Activated CD8-positive, alpha-beta T cell treated with anti-CD3 and anti-CD28 coated beads, Interleukin-2, amount 10 ng/mL, durations not matched to agents 7 days and 5 days (primary cell): ENCODE measurements at regions of chr1 and their contacts with region 1.

Region 1: DNA sequence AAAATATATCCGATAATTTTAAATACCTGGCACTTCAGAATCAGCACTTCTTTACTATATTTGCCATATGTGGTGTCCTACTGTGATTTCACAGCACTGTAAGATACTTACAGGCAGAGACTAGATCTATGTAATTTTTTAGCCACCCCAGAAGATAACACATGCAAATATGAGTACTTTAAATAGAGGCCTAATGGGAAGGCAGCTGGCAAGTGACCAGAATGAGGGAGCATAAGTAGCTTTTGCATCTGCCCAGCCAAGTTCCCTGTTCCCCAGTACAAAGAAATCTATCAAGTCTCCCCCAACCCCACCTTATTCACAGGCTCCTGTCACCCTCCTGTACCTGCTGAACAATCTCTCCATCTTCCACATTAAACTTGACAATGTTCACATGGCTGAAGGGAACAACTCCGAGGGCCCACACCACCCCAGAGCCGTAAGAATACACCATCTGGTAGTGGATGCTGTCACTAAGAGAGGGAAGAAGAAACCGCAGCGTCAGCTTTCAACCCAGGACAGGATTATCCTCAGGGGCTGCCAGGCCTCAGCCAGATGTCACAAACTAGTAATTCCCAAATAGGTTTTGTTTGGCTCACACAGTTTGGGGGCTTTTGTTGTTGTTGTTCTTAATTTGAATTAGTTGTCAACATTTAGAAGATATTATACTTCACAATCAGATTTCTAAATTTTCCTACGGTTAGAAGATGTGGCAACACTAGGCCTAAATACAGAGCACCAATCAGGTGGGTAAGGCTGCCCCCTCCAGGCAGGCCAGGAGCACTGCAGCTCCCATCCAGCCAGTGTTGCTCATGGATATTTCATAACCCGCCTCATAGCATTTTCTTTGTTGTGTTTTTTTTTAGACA is 10.4 kb downstream of the EMC1 start:
- DNase-seq: peak; percentile 72
- ATAC-seq: peak; percentile 85
- H3K4me3 Mint-ChIP-seq: no peak overlapping the region
- H3K27ac Mint-ChIP-seq: peak overlapping the region; percentile 30
- H3K4me1 Mint-ChIP-seq: no peaks in the 10 kb centered on the region
- H3K27me3 Mint-ChIP-seq: no peaks in the 10 kb centered on the region

Region 2: DNA sequence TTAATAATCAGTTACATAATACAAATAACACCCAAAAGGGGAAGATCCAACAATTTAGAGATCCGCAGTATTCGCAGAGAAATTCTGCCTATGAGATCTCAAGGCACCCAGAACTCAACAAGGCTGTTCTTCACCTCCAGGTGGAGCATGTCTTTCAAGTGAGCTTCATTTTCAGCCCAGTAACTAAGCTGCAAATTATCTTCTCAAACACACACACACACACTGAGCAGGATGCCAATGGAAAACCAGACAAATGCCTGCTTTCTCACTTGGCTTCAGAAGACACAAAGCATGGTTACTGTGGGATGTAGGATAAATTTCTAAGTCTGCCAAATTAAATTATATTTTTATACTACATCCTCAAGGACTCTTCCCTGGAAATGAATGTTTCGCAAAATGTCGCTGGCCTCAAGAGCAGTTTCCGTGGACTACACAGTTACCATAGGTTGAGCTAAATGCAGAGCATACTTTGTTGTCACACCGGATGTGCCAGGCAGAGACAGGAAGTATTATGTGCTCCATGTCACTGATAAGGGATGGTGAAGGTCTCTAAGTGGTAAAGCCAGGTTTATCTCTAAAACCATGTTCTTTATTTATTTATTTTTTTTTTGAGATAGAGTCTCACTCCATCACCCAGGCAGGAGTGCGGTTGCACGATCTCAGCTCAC is 61.2 kb before region 1 on chr1:
- CTCF ChIA-PET with region 1: interaction called, 27 read pairs
- POLR2A ChIA-PET with region 1: no interaction called
- DNase-seq: peak; percentile 64
- ATAC-seq: peak; percentile 83
- H3K4me3 Mint-ChIP-seq: no peak overlapping the region
- H3K27ac Mint-ChIP-seq: peak overlapping the region; percentile 86
- H3K4me1 Mint-ChIP-seq: peaks cover 28% of the 10 kb centered on the region
- H3K27me3 Mint-ChIP-seq: no peaks in the 10 kb centered on the region

Region 3: GRCh38 chr1:19251305-19252196 is 10.6 kb after region 1 on chr1 and contains the starts of genes EMC1 and MRTO4:
- CTCF ChIA-PET with region 1: interaction called, 10 read pairs
- POLR2A ChIA-PET with region 1: interaction called, 3 read pairs
- DNase-seq: peak; percentile 92
- ATAC-seq: peak; percentile 94
- H3K4me3 Mint-ChIP-seq: peak within 1 kb of the TSS; percentile 97
- H3K27ac Mint-ChIP-seq: peak within 1 kb of the TSS; percentile 98
- H3K4me1 Mint-ChIP-seq: peaks cover 22% of the 10 kb centered on the region
- H3K27me3 Mint-ChIP-seq: no peaks in the 10 kb centered on the region
- total RNA-seq, gene EMC1: 36.6 to 38.9 TPM
- total RNA-seq, gene MRTO4: 43.5 to 44.4 TPM

Region 4: DNA sequence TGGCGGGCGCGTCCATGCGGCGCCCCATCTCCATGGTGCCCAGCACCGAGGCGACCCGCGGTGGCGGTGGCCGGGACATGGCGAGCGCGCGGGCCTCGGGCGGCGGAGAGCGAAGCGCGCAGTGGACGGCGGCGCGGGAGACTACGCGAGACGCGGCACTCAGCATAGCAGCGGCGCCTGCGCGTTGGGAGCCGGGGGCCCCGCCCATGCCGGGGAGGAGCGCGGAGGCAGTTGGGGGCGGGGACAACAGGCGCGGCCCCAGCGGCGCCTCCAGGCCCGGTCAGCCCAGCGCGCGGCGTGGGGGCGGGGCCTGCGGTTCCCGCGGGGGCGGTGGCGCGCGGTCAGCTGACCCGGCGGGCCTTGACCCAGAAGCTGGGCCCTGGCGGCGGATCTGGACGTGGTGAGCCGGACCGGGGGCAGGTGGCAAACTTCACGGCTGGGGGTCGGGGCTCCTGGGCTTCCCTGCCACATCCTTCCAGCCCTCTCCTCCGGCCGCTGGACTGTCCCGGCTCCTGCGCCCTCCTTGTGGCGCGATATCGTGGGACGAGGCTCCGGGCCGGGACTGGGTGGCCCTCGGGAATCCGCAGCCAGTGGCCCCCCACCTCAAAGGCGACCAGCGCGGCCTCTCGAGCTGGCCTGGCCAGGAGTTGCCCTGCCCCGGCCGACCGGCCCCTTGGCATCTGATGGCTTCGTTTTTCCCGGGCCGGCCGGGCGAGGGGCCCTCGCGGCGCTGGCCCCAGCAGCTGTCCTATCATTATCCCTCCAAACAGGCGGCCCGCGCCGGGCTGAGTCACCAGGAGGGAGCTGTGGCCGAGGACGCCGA is 71.3 kb after region 1 on chr1 and contains the starts of genes AKR7A2 and SLC66A1:
- CTCF ChIA-PET with region 1: no interaction called
- POLR2A ChIA-PET with region 1: no interaction called
- DNase-seq: peak; percentile 91
- ATAC-seq: peak; percentile 97
- H3K4me3 Mint-ChIP-seq: peak within 1 kb of the TSS; percentile 83
- H3K27ac Mint-ChIP-seq: peak within 1 kb of the TSS; percentile 78
- H3K4me1 Mint-ChIP-seq: peaks cover 40% of the 10 kb centered on the region
- H3K27me3 Mint-ChIP-seq: no peaks in the 10 kb centered on the region
- total RNA-seq, gene AKR7A2: 46.3 to 50.6 TPM
- total RNA-seq, gene SLC66A1: 4.0 to 5.3 TPM